ENCODE measurements at regions of chr9 and their contacts with region 1.

Region 1: DNA sequence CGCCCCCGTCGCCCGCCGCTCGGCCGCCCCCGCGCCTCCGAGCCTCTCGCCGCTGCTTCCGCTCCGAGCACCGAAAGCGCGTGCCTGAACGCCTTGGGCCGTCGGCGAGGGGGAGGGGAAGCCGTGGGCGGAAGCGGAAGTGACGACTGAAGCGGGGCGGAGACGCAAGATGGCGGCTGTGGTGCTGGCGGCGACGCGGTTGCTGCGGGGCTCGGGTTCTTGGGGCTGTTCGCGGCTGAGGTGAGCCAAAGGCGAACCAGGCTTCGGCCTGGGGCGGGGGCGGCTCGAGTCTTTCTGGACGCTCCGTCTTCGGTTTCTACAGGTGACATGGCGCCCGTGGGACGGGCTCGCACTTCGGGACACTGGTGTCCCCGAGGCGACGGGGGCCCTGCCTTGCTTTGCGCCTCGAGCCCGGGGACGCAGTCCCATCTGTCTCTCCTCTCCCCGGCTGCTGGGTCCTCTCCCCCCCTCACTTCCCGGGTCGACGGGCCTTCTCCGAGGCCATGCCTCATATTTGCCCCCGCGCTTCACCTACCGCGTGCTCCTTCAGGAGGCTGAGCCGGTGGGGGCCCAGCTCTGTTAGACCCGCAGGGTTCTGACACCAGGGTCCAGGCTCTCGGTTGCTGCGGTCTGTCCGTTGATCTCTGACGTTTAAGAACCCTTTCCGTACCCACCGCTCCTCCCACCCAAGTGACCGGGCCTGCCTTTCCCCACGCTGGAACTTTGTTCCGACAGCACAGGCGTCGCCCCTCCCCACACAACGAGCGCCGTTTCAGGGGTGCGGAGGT is at the starts of genes ENTR1 and PMPCA:
- DNase-seq: peak; percentile 98
- ATAC-seq: peak; percentile 87
- H3K4me3 Mint-ChIP-seq: peak within 1 kb of the TSS; percentile 92
- H3K27ac Mint-ChIP-seq: peak within 1 kb of the TSS; percentile 90
- H3K4me1 Mint-ChIP-seq: peaks cover 41% of the 10 kb centered on the region
- H3K27me3 Mint-ChIP-seq: no peaks in the 10 kb centered on the region
- CTCF ChIP-seq: no peak
- total RNA-seq, gene ENTR1: 89.4 and 101 TPM in 2 replicates
- total RNA-seq, gene PMPCA: 67.2 and 75.3 TPM in 2 replicates

Region 2: DNA sequence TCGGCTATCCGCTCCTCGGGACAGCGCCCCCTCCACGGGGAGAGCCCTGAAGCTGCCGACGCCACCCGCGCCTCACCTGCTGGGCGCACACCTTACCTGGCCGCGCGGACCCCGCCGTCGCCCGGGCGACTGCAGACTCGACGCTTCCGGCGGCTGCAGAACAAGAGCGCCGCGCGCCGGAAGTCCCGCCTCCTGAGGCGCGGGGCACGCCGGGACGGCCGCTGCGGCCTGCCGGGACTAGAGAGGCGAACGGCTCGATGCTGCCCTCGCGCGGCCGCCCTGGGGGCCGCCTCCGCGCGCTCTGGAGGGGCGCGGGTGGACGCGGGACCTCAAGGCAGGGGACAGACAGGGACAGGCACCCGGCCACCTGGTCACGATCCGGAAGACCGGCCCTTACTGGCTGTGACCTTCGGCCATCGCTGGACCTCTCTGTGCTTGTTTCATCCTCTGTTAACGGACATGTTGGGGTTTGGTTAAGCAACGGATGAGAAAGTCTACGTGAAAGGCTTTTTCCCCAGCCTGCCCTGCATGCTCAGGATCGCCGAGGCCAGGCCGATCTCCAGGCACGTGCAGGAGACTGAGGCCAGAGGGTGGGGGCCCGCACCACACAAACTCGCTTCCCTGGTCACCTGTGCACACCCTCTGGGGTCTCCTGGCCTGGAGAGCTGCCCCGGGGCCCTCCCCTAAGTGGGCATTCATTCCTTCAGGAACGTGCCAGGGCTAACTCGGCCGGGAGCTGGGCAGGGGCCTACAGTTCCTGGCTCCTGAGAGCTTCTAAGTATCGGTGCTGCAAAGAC is 10.5 kb before region 1 on chr9 and contains the start of gene SNAPC4:
- CTCF ChIA-PET with region 1: interaction called, 8 read pairs
- POLR2A ChIA-PET with region 1: interaction called, 10 read pairs
- intact Hi-C with region 1: loop called (anchors 1 kb)
- DNase-seq: peak; percentile 88
- ATAC-seq: peak; percentile 76
- H3K4me3 Mint-ChIP-seq: peak within 1 kb of the TSS; percentile 87
- H3K27ac Mint-ChIP-seq: peak within 1 kb of the TSS; percentile 46
- H3K4me1 Mint-ChIP-seq: peaks cover 48% of the 10 kb centered on the region
- H3K27me3 Mint-ChIP-seq: no peaks in the 10 kb centered on the region
- CTCF ChIP-seq: peak; percentile 21
- total RNA-seq, gene SNAPC4: 20.0 and 22.2 TPM in 2 replicates

Region 3: DNA sequence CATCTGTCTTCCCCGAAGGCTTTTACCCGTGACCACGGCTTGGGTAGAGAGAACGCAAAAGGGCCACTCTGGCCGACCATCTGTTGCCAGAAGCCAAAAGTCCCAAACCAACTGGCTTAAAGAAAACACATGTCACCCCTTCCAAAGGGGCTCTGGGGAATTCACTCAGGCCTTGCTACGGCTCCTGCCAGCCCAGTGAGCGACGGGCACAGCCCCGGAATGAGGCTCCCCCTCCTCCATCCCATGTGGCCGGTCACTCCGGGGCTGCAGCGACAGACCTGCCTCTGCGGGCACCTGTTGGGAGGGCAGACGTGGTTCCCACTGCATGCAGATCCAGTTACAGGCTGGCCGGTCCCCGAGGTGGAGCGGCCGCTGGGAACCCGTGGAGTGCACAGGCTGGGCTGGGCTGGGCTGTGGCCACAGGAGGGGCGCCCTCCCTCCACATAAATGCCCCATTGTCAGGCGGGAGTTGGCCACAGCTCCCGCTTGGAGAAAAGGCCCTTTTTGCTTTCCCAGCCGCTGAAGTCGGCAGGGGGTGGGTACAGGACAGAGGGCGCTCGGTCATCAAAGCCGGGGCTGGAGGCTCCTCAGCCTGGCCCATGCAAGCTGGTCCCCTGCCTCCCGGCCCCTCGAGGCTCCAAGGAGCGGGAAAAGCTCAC is 115.3 kb after region 1 on chr9:
- CTCF ChIA-PET with region 1: no interaction called
- POLR2A ChIA-PET with region 1: no interaction called
- intact Hi-C with region 1: no loop called
- DNase-seq: no peak
- ATAC-seq: no peak
- H3K4me3 Mint-ChIP-seq: no peak overlapping the region
- H3K27ac Mint-ChIP-seq: no peak overlapping the region
- H3K4me1 Mint-ChIP-seq: peaks cover 28% of the 10 kb centered on the region
- H3K27me3 Mint-ChIP-seq: no peaks in the 10 kb centered on the region
- CTCF ChIP-seq: no peak

Measured in activated B cell treated with CpG ODN at 0.5 μM for 24 hours (primary cell).